ENCODE measurements at regions of chr18 and their contacts with region 1.

Region 1: GRCh38 chr18:3447895-3448837 is 1.8 kb upstream of the TGIF1 start:
- DNase-seq: peak; percentile 78 to 97 (median 94)

Region 2: DNA sequence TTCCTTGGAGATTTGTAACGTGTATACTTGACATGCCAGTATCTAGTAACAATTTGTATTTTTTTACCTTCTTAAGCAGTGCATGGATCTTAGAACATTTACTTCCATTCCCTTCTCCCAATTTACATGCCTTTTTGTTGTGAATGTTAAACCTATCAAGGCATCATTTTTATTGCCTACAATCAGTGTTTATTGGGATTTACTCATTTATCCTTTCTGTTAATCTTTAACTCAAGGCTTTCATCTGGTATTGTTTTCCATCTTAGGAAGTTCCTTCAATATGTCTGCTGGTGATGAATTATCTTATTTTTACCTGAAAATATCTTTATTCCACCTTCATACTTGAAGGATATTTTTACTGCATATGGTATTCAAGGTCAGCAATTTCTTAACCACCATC is 689.9 kb before region 1 on chr18:
- intact Hi-C with region 1: no loop called
- DNase-seq: no peak

Region 3: DNA sequence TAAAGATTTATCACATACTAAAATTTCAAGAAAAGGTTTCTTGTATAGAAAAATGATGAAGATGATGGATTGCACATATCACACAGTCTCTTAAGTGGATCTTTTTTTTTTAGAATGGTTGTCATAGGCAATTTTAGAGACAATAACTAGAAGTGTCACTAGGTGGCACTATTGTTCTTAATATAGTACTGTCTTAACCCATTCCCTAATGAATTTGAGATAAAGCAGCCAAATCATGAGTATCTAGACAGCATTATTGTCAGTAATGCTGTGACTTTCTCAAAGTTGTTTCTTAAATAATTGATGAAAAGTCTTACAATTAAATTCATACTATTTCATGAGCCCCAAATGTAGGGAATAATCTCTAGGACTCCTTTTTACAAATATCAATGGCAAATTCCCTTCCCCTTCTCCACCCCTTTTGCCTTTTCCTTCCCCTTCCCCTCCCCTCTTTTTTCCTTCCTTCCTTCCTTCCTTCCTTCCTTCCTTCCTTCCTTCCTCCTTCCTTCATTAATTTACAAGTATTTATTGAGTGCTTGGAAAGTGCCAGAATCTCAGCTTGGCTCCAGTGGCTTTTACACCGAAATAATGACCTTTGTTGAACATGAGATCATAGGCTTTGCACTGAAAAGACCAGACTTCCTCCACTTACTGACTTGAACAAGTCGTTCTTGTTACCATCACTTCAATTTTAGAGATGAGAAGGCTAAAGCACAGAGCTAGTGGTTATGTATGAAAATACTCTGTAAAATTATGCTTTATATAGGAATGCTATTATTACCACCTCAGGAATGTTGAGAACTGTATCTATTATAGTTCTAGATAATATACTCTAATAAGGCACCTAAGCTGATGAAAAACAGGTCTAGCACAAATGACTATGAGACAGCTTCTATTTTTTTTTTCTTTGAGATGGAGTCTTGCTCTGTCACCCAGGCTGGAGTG is 166.4 kb before region 1 on chr18:
- intact Hi-C with region 1: loop called (anchors 5 kb)
- DNase-seq: peak in 2 of 42 donors; percentile 13 to 48

Region 4: DNA sequence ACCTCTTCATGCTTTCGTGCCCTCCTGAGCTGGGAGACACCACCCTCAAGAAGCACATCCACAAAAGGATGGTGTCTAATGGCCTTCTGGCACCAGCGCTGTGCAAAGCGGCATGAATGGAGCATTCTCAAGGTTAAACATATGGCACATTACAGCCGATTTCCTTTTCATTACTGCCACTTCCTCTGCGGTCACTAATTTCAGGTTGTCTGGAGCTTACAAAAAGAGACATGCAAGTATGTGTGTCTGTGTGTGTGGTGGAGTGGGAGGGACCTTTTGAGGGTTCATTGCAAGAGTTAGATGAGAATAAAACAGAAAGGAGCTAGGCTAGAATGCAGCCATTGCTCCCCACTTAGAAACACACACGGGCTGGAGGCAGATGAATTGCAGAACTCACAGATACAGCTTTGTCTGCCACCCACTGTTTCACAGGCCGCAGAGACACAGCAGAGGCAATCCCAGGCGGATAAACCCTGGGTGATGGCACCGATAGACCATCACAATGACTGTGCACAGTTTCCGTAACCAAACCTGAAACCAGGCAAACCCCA is 77.8 kb after region 1 on chr18:
- intact Hi-C with region 1: loop called (anchors 10 kb)
- DNase-seq: peak in 41 of 42 donors; percentile 19 to 82 (median 61)

Region 5: DNA sequence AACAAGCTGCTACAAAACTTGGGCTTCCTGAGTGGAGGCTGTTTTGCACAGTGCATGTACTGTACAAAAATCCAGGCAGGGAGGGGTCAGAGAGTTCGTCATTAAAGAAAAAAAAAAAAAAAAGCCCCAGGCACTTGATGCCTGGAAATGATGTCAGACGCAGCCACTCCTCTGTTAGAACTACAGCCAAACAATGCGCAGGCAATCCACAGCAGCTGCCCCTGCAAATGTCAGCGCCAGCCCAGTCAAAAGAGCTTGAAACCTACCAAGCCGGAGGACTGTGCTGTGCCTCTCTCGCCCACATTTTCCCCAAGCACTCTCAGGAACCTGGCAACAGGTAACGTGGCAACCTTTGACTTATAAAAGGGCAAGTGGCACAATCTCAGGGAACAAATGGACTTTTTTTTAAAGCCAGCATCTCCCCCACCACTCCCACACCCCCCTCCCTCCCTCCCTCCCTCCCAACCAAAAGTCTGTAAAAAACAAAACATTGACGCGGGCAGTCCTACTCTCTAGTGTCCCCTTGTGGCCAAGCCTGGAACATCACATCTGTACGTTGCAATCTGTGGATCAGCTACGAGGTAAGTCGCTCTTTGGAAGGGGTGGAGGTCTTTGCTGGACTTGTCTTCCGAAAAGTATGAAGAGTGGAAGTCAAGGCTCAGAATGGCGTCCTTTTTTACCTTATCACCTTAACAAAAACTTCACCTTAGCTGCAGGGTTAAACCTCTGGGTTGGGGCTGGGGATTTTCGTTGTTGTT is 145.9 kb after region 1 on chr18:
- intact Hi-C with region 1: loop called (anchors 5 kb)
- DNase-seq: peak; percentile 60 to 97 (median 89)

Region 6: DNA sequence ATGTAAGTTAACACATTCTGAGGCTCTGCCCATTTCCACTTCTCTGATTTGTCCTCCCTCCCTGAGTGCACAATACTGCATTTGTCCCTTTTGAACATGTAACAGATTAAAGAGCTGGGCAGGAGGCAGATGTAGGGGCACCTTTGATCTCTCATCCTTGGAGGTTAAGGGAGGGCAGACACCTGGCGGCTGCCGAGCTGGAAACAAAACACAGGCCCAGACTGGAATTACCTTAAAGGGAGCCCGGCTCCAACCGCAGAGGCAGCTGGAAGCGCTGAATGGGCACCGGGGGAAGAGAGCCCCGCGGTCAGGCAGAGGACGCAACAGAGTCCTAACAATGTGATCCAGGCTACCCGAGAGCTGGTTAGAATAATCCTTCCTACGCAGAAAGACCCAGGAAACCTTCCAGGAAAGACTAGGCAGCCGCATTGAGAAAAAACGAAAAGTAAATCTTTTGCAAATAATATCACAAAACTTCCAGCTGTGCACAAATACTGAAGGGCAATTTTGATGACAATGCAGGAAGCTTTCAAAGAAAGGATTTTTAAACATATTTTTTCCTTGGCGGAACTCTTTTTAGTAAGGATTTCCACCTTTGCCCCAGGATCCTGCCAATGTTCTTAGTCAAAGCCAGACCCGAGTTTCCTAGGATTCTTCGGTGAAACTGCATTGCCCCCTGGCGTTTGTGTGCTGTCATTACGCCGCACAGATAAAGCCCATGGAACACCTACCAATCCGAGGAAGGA is 217.8 kb after region 1 on chr18:
- intact Hi-C with region 1: loop called (anchors 5 kb)
- DNase-seq: peak; percentile 60 to 95 (median 86)